Caco-2 (cell line): ENCODE measurements at regions of chr1 and their contacts with region 1.

Region 1: DNA sequence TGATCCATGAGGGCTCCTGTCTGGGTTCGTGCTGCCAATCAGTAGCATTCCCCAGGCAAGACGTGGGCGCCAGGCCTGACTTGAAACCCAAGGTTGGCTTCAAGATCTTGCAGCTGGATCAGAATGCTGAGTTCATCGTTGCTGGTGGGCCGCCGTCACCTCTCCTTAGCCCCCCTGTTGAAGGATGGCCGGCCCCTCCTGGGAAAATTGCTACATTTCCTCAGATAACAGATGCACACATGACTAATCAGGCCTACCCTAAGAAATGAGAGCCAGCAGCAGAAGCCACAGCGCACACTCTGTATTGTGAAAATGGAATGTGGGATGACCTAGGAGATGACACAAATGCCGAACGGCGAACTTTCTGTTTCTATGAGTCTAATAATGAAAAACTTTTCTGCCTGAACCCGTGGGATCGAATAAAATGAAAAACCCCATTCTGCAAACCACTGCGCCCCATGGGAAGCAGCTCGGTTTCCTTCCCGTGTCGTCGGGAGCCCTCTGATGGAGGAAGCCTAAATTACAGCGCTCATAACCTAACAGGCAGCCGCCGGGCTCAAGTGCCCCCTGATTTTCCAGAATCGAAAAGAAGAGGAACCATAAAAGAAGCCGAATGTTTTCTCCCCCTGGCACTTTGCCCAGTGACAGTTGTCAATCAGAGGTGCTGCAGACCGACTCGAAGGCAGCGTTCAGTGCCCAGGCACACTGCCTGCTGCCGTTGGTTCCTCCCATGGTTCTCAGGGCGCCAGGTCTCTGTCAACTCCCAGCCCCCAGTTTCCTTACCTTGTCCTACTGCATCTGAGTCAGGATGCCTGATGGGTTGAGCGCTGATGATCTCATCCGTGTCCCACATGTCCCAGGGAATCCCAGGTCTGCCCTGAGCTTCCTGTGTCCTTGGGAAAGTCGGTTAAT is 38.2 kb upstream of the H6PD start:
- DNase-seq: peak; percentile 59 to 67
- H3K4me3 ChIP-seq: no peak overlapping the region
- H3K4me3 Mint-ChIP-seq: no peak overlapping the region
- H3K27ac Mint-ChIP-seq: no peak overlapping the region
- H3K4me1 ChIP-seq: peaks cover 7% of the 10 kb centered on the region; the same call in 1 of the 2 replicates
- H3K4me1 Mint-ChIP-seq: no peaks in the 10 kb centered on the region
- H3K27me3 ChIP-seq: no peaks in the 10 kb centered on the region
- H3K27me3 Mint-ChIP-seq: no peaks in the 10 kb centered on the region
- CTCF ChIP-seq: peak; percentile 72 to 80

Region 2: DNA sequence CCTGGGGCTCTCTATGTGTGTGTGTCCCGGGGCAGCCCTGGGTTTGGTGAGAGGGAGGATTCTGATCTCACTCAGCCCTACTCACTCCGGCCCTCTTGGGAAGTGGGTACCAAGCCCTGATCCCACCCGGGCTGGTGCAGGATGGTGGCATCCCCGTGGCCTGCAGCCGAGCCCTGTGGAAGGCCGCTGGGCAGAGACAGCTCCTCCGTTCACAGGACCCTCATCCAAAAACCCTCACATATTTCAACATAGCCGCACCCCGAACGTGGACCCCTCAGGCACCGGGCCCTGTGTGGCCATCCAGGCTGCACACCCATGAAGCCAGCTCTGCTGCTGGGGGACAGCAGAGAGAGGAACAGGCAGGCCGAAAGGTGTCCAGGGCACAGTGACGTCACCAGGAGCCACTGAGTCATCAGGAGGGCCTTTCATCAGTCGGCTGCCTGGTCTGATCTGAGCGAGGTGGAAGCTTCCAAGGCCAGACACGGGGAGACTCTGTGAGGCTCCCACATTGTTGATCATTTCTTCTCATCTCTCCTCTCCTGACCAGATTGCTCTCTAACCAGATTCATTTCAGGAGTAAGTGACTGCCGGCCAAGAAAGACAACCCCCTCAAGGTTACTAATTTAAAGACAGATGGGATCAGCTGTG is 51.2 kb before region 1 on chr1:
- CTCF ChIA-PET with region 1: interaction called, 4 read pairs
- POLR2A ChIA-PET with region 1: no interaction called
- intact Hi-C with region 1: loop called (anchors 1 kb)
- DNase-seq: no peak
- H3K4me3 ChIP-seq: no peak overlapping the region
- H3K4me3 Mint-ChIP-seq: no peak overlapping the region
- H3K27ac Mint-ChIP-seq: no peak overlapping the region
- H3K4me1 ChIP-seq: no peaks in the 10 kb centered on the region
- H3K4me1 Mint-ChIP-seq: no peaks in the 10 kb centered on the region
- H3K27me3 ChIP-seq: no peaks in the 10 kb centered on the region
- H3K27me3 Mint-ChIP-seq: no peaks in the 10 kb centered on the region
- CTCF ChIP-seq: no peak

Region 3: DNA sequence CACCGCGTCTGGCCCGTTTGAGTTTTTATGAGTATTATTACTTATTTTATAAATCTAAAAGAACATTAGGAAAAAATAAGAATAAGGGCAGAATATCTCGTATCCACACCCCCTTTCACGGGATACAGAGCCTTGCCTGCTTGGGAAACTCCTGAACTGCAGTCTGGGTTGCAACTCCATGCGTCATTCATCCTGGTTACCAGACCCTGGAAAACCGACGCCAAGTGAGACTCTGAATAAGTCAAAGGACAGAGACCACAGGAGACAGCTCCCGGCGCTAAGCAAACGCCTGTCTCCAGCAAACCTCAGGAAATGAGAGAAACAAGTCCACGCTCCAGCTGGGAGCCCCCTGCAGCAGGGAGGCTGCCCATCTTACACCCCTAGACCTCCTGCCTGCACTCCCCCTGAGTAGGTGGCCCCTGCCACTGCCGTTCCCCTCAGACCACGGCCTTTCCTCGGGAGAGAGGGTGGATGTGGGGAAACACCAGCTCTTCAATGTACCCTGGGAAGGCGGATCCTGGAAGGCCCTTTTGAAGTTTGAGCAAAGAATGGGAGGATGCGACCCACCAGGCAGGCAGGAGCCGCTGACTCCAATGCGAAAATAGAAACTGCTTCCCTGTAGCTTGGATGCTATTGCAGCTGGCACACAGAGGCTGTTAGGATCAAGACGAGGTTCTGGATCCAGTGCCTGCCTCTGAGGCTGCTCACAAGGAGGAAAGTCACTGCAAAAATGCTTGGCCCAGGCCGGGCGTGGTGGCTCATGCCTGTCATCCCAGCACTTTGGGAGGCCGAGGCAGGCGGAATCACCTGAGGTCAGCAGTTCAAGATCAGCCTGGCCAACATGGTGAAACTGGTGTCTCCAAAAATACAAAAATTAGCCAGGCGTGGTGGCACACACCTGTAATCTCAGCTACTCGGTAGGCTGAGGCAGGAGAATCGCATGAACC is 29.8 kb before region 1 on chr1:
- CTCF ChIA-PET with region 1: no interaction called
- POLR2A ChIA-PET with region 1: no interaction called
- intact Hi-C with region 1: no loop called
- DNase-seq: no peak
- H3K4me3 ChIP-seq: no peak overlapping the region
- H3K4me3 Mint-ChIP-seq: no peak overlapping the region
- H3K27ac Mint-ChIP-seq: no peak overlapping the region
- H3K4me1 ChIP-seq: peaks cover 24% of the 10 kb centered on the region
- H3K4me1 Mint-ChIP-seq: peaks cover 9% of the 10 kb centered on the region
- H3K27me3 ChIP-seq: no peaks in the 10 kb centered on the region
- H3K27me3 Mint-ChIP-seq: no peaks in the 10 kb centered on the region
- CTCF ChIP-seq: no peak

Region 4: GRCh38 chr1:9181176-9181906 is 15.0 kb before region 1 on chr1:
- CTCF ChIA-PET with region 1: no interaction called
- POLR2A ChIA-PET with region 1: no interaction called
- intact Hi-C with region 1: loop called (anchors 1 kb)
- DNase-seq: peak; percentile 64 to 87
- H3K4me3 ChIP-seq: peak overlapping the region; percentile 75
- H3K4me3 Mint-ChIP-seq: peak overlapping the region; percentile 87
- H3K27ac Mint-ChIP-seq: peak overlapping the region; percentile 72
- H3K4me1 ChIP-seq: peaks cover 15% of the 10 kb centered on the region; the same call in 1 of the 2 replicates
- H3K4me1 Mint-ChIP-seq: peaks cover 5% of the 10 kb centered on the region
- H3K27me3 ChIP-seq: no peaks in the 10 kb centered on the region
- H3K27me3 Mint-ChIP-seq: no peaks in the 10 kb centered on the region
- CTCF ChIP-seq: peak; percentile 86 to 95